A673 (cell line): ENCODE measurements at regions of chr4 and their contacts with region 1.

Region 1: GRCh38 chr4:173494013-173494970 is 35.7 kb downstream of the HAND2 start:
- DNase-seq: peak; percentile 85
- H3K4me3 ChIP-seq: peak overlapping the region; percentile 40
- H3K27ac ChIP-seq: no peak overlapping the region
- H3K4me1 ChIP-seq: peaks cover 39% of the 10 kb centered on the region
- H3K27me3 ChIP-seq: no peaks in the 10 kb centered on the region
- CTCF ChIP-seq: peak; percentile 87

Region 2: DNA sequence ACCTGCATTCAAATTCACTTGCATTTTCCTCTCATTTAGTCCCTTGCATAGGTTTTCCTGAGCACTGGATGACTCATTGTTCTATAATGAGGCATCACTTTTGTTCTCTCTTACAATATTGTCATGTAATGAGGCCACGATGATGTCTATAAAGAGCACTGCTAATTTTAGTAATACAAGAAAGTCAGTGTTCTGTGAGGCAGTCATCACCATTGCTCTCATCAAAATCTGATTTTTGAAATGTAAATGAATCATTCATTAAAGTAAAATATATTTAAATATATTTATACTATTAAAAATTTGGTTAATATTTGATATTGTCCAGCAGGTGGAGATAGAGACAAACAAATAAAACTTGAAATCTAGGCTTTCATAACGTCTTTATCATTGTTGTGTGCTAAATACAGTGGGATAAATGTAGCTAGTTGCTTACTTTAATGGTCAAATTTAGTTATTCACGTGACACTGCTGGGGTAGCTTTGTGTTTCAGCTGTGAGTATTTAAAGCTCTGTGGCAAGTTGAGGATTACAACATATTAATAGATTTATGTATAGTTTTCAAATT is 175.6 kb before region 1 on chr4:
- CTCF ChIA-PET with region 1: no interaction called
- POLR2A ChIA-PET with region 1: no interaction called
- intact Hi-C with region 1: loop called (anchors 5 kb)
- DNase-seq: peak; percentile 71
- H3K4me3 ChIP-seq: no peak overlapping the region
- H3K27ac ChIP-seq: no peak overlapping the region
- H3K4me1 ChIP-seq: peaks cover 20% of the 10 kb centered on the region
- H3K27me3 ChIP-seq: no peaks in the 10 kb centered on the region
- CTCF ChIP-seq: peak; percentile 54; the same call in 1 of the 2 replicates

Region 3: GRCh38 chr4:173448603-173449379 is 45.5 kb before region 1 on chr4:
- CTCF ChIA-PET with region 1: no interaction called
- POLR2A ChIA-PET with region 1: no interaction called
- intact Hi-C with region 1: loop called (anchors 2 kb)
- DNase-seq: peak; percentile 47
- H3K4me3 ChIP-seq: no peak overlapping the region
- H3K27ac ChIP-seq: peak overlapping the region; percentile 6
- H3K4me1 ChIP-seq: peaks cover 22% of the 10 kb centered on the region
- H3K27me3 ChIP-seq: no peaks in the 10 kb centered on the region
- CTCF ChIP-seq: no peak